Spleen (tissue), 13 donors: ENCODE measurements at regions of chr3 and their contacts with region 1.

Region 1: GRCh38 chr3:129942296-129942695 is 32.2 kb upstream of the TRH start:
- DNase-seq: peak; percentile 79
- H3K4me3 ChIP-seq: no peak overlapping the region
- H3K27ac ChIP-seq: no peak overlapping the region
- H3K4me1 ChIP-seq: peaks cover 0 to 5% (median 2%) of the 10 kb centered on the region in 6 donors
- H3K27me3 ChIP-seq: no peaks in the 10 kb centered on the region
- CTCF ChIP-seq: peak; percentile 52 to 85 (median 78)
- POLR2A ChIP-seq: no peak

Region 2: GRCh38 chr3:129994883-129995559 is 52.7 kb after region 1 on chr3:
- intact Hi-C with region 1: loop called (anchors 5 kb)
- DNase-seq: no peak
- H3K4me3 ChIP-seq: no peak overlapping the region
- H3K27ac ChIP-seq: no peak overlapping the region
- H3K4me1 ChIP-seq: no peaks in the 10 kb centered on the region
- H3K27me3 ChIP-seq: peaks cover 0 to 4% (median 0%) of the 10 kb centered on the region in 7 donors
- CTCF ChIP-seq: no peak
- POLR2A ChIP-seq: no peak